Heart left ventricle (tissue), 16 donors: ENCODE measurements at regions of chr13 and their contacts with region 1.

Region 1: DNA sequence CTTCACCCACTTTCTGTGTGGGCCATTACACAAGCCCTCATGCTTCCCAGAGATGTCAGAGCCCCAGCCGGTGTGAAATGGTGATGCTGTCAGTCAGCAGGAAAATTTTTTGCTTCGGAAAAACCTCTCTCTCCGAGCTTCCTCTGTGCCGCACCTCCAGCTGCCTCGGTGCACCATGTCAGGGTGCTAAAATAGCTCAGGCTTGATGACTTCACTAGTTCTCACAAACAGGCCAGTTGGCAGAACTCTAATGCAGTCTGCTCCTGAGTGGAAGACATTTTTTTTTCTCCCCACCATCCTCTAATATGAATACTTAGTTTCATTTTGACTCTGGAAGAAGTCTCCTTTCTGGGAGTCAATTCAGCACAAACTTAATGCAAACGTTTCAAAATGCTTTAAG is 71.3 kb downstream of the KLF12 start:
- DNase-seq: peak; percentile 64 to 84 (median 75)
- ATAC-seq: peak; percentile 97 to 98 (median 97)
- H3K4me3 ChIP-seq: peak overlapping the region in 10 of 12 donors; percentile 6 to 44 (median 39)
- H3K27ac ChIP-seq: peak overlapping the region; percentile 23 to 92 (median 82)
- H3K4me1 ChIP-seq: peaks cover 0 to 74% (median 45%) of the 10 kb centered on the region in 12 donors
- H3K27me3 ChIP-seq: no peaks in the 10 kb centered on the region
- CTCF ChIP-seq: no peak
- POLR2A ChIP-seq: peak in 1 of 2 donors; percentile 15

Region 2: DNA sequence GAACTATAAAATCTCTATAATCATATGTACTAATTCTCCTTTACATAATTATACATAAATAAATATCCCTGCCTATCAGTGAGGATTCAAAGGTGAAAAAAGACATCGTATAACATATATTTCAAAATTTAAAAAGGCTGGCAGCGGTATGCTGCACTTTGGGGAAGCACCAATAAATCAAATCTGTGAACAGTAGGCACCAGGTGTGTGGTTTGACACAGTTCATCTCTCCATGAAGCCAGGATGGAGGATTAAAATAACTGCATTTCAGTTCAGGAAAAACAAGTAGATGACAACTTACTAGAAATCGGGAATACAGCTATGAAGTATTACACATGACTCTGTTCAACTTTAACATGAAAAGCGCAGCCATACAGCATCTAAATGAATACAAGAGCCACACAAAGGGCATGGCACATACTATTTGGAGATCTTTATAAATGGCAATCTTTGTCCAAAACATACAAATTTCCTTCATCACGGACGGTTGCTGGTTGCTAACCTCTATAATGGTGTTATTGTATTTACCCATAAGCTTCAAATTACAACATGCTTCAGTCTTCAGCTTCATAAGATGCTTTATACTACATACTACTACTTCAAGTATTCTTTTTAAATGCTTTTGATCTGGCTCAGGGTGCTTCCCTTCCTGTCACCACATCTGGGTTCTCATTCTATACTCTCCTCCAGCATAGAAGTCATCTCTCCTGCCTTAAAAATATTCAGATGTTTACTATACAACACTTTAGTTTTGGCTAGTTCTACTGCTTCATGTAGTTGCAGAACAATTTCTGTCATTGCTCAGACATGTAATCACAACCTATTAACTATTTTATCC is 57.4 kb before region 1 on chr13:
- intact Hi-C with region 1: no loop called
- DNase-seq: no peak
- ATAC-seq: no peak
- H3K4me3 ChIP-seq: no peak overlapping the region
- H3K27ac ChIP-seq: no peak overlapping the region
- H3K4me1 ChIP-seq: peaks cover 0 to 18% (median 6%) of the 10 kb centered on the region in 12 donors
- H3K27me3 ChIP-seq: no peaks in the 10 kb centered on the region
- CTCF ChIP-seq: no peak
- POLR2A ChIP-seq: no peak

Region 3: DNA sequence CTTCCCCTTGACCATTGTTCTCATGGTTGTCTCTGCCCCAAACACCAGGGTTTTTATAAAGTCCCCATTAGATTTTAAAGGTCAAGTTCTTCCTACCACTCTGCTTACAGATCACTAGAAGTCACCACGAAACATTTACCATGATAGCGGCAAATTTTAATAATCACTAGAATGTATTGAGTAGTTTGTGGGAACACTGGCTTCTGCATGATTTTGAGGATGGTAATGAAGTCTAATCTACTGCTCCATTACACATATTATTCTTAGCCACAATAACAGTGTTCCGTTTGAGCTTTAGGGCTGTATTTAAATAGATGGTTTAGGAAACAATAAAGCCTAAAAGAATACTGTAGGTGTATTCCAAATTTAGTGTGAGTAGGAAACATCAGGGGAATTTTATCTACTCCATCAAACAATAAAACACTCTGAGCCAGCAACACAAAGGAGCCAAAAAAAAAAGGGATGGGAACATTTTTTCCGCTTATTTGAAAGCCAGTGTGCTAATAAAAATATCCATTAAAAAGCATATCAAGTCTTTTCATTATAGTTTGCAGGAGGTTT is 21.5 kb after region 1 on chr13:
- intact Hi-C with region 1: loop called in 1 of 10 experiments (anchors 1 kb)
- DNase-seq: no peak
- ATAC-seq: peak in 3 of 4 donors; percentile 33 to 62 (median 49)
- H3K4me3 ChIP-seq: no peak overlapping the region
- H3K27ac ChIP-seq: no peak overlapping the region
- H3K4me1 ChIP-seq: peaks cover 0 to 57% (median 30%) of the 10 kb centered on the region in 12 donors
- H3K27me3 ChIP-seq: no peaks in the 10 kb centered on the region
- CTCF ChIP-seq: no peak
- POLR2A ChIP-seq: no peak

Region 4: GRCh38 chr13:74115138-74115537 is 52.2 kb after region 1 on chr13:
- intact Hi-C with region 1: loop called in 1 of 10 experiments (anchors 10 kb)
- DNase-seq: no peak
- ATAC-seq: no peak
- H3K4me3 ChIP-seq: no peak overlapping the region
- H3K27ac ChIP-seq: no peak overlapping the region
- H3K4me1 ChIP-seq: peaks cover 0 to 31% (median 7%) of the 10 kb centered on the region in 12 donors
- H3K27me3 ChIP-seq: no peaks in the 10 kb centered on the region
- CTCF ChIP-seq: no peak
- POLR2A ChIP-seq: no peak

Region 5: GRCh38 chr13:74533226-74533625 is 470.3 kb after region 1 on chr13:
- intact Hi-C with region 1: no loop called
- DNase-seq: no peak
- ATAC-seq: no peak
- H3K4me3 ChIP-seq: no peak overlapping the region
- H3K27ac ChIP-seq: no peak overlapping the region
- H3K4me1 ChIP-seq: no peaks in the 10 kb centered on the region
- H3K27me3 ChIP-seq: no peaks in the 10 kb centered on the region
- CTCF ChIP-seq: no peak
- POLR2A ChIP-seq: no peak